Aorta (tissue), 5 donors: ENCODE measurements at regions of chr12 and their contacts with region 1.

Region 1: DNA sequence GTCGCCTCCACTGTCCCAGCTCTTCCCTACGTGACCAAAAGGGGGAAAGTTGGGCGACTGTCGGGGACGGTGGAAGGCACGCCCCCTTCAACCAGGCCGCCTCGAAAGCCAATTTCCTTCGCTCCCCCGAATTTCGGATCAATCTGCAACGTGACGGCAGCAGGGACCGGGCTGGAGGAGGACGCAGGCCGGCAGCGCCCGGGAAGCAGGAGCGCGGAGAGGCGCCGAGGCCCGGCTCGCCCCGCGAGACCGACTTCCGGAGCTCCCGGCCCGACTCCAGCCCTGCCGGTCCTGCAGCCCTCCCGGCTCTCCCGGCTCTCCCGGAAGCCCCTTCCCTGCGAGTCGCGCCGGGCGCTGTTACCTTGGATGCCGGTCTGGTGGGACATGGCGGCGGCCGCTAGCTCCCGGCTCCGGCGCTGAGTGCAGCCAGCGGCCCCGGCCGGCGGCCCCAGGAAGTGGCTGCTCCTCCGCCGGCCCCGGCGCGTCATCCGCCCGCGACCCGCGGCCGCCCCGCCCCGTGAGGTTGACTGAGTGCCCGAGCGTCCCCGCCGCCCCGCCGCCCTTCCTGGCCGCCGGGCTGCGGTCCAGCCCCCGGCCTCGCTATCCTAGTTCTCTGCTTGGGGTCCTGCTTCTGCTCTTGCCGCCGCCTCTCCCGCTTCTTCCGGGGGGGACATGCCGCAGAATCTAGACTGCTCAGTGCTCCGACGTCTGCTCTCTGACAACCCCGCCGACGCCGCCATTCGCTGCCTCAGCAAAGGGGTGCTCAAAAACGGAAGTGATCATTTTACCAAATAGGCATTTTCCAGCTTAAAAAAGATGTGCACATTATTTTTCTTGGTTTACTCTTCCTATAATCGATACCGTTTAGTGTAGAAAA is at the start of gene TWF1:
- DNase-seq: peak; percentile 92 to 97
- ATAC-seq: peak; percentile 99
- H3K4me3 ChIP-seq: peak within 1 kb of the TSS; percentile 84 to 89
- H3K27ac ChIP-seq: peak within 1 kb of the TSS; percentile 69 to 91
- H3K4me1 ChIP-seq: no peaks in the 10 kb centered on the region
- H3K27me3 ChIP-seq: no peaks in the 10 kb centered on the region
- total RNA-seq, gene TWF1: 52.5 to 53.7 TPM

Region 2: DNA sequence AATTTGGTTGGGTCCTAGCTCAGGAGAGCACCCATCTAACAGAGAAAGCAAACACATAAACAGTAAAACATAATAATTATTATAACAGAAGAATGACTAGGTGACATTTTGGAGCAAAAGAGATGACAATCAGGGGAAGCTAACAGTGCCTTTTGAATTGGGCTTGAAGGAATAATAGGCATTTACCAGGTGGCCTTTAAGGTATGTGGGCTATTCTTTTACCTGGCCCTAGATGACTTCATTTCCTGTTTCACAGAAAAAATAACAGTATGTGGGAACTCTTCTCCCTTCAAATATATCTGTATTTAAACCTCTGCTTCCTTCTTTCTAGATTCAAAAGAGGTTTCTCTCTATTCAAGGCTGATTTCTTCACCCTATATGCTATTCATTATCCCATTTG is 43.5 kb before region 1 on chr12:
- intact Hi-C with region 1: loop called in 1 of 2 experiments (anchors 5 kb)
- DNase-seq: no peak
- ATAC-seq: no peak
- H3K4me3 ChIP-seq: no peak overlapping the region
- H3K27ac ChIP-seq: no peak overlapping the region
- H3K4me1 ChIP-seq: peaks cover 6 to 7% of the 10 kb centered on the region in 2 donors
- H3K27me3 ChIP-seq: no peaks in the 10 kb centered on the region

Region 3: DNA sequence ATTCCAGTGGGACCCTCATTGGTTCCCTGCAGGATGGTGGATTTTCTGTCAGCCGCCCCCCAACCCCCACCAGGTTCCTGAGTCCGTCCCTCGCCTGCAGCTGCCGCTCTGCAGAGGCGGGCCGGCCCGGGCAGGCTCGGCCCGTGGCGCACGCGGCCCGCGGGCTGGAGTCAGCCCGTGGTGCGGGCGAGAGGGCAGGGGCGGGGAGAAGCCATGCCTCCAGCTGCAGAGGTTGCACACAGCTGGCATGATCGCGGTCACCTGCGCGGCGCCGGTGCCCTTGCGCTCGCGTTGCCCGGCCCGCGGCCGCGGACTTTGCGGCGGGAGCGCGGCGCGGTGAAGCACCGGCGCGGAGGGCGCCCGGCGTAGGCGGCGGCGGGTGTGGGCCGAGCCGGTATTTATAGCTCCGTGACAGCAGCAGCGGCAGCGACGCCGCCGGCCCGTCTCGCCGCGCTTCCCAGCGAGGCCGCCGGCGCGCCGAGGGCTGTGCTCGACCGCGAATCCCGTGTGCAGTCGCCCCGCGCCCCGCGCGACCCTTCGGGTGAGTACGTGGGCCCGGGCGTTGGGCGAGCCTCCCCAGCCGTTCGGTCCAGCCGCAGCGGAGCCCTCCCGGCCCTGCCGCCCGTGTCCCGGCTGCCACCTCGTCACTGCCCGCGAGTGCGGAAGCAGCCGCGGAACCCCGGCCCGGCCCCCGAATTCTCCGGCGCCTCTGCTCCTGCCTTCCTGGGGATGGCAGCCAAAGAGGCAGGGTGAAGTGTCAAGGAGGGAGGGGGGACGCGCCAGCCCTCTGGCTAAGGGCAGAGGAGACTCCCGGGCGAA is 29.8 kb after region 1 on chr12 and contains the start of gene TMEM117:
- intact Hi-C with region 1: loop called in 1 of 2 experiments (anchors 1 kb)
- DNase-seq: peak; percentile 85 to 93
- ATAC-seq: peak; percentile 90
- H3K4me3 ChIP-seq: peak within 1 kb of the TSS; percentile 81 to 86
- H3K27ac ChIP-seq: peak within 1 kb of the TSS; percentile 89 to 97
- H3K4me1 ChIP-seq: no peaks in the 10 kb centered on the region
- H3K27me3 ChIP-seq: no peaks in the 10 kb centered on the region
- total RNA-seq, gene TMEM117: 5.9 to 10.6 TPM

Region 4: DNA sequence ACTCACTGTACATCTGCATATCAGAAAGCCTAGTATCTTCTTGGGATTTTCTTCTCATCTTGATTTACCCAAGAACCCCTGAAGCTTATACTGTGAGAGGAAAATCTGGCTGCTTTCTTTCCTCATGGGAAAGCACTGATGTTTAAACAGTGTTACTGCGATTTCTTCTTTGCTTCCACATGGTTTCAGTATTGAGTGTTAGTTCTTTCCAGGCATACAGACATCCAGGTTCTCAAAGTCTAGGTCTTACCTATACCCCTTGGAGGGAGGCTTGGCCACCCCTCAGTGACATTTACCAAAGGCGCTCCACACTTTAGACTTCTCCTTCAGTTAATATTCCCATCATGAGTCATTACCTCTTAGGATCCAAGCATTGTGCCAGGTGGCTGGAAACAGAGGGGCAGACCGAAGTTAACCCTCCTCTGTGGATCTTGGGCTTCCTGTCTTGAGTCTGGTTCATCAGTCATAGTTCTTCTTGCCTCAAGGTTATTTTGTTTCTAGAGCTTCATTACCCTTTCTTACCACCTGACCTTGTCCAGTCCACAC is 108.9 kb after region 1 on chr12:
- intact Hi-C with region 1: no loop called
- DNase-seq: no peak
- ATAC-seq: peak; percentile 44
- H3K4me3 ChIP-seq: no peak overlapping the region
- H3K27ac ChIP-seq: no peak overlapping the region
- H3K4me1 ChIP-seq: no peaks in the 10 kb centered on the region
- H3K27me3 ChIP-seq: no peaks in the 10 kb centered on the region